Activated CD4-positive, alpha-beta memory T cell treated with anti-CD3 and anti-CD28 coated beads, Interleukin-2, amount 10 ng/mL, durations not matched to agents 7 days and 5 days (primary cell): ENCODE measurements at regions of chr1 and their contacts with region 1.

Region 1: GRCh38 chr1:113978863-113979702 is at the start of gene OLFML3:
- DNase-seq: peak; percentile 62
- H3K4me3 Mint-ChIP-seq: no peak within 1 kb of the TSS
- H3K27ac Mint-ChIP-seq: peak within 1 kb of the TSS; percentile 9
- H3K4me1 Mint-ChIP-seq: peaks cover 42% of the 10 kb centered on the region
- H3K27me3 Mint-ChIP-seq: no peaks in the 10 kb centered on the region
- total RNA-seq, gene OLFML3: 0.20 to 0.45 TPM

Region 2: DNA sequence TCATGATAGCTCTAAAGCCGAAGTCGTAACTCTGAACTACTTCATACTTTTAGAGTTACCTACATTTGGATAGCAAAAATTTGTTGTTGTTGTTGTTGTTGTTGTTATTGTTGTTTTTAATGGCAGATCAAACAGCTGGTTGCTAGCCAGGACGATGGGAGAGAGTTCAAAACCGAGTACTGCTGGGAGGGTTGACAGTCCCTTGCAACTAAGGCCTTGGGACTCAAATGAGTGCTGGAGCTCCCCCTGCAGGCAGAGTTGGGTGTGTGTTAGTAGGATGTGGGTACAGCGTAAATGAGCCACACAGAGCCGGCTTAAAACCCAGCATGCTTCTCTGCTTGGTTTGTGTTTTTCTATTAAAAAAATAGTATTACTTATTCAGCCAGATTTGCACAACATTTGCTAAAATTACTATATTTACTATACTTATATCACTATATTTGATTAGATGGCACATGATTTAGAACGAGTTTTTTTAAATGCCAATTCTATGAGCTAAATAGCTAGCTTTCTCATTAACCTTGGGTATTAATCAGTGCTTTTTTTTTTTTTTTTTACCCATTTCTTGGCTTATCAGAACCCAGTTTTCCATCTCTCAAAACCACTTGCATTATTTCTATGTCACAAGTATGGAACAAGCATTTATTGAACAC is 303.8 kb after region 1 on chr1:
- CTCF ChIA-PET with region 1: interaction called, 35 read pairs
- POLR2A ChIA-PET with region 1: no interaction called
- DNase-seq: peak; percentile 88
- H3K4me3 Mint-ChIP-seq: no peak overlapping the region
- H3K27ac Mint-ChIP-seq: no peak overlapping the region
- H3K4me1 Mint-ChIP-seq: peaks cover 3% of the 10 kb centered on the region
- H3K27me3 Mint-ChIP-seq: peaks cover 3% of the 10 kb centered on the region

Region 3: GRCh38 chr1:114428083-114428749 is 449.1 kb after region 1 on chr1:
- CTCF ChIA-PET with region 1: interaction called, 11 read pairs
- POLR2A ChIA-PET with region 1: interaction called, 3 read pairs
- DNase-seq: peak; percentile 18
- H3K4me3 Mint-ChIP-seq: no peak overlapping the region
- H3K27ac Mint-ChIP-seq: no peak overlapping the region
- H3K4me1 Mint-ChIP-seq: peaks cover 8% of the 10 kb centered on the region
- H3K27me3 Mint-ChIP-seq: no peaks in the 10 kb centered on the region